Activated B cell treated with CpG ODN at 0.5 μM for 24 hours (primary cell): ENCODE measurements at regions of chr17 and their contacts with region 1.

Region 1: GRCh38 chr17:75077496-75078283 is 10.1 kb upstream of the SLC16A5 start:
- DNase-seq: peak; percentile 53
- ATAC-seq: peak; percentile 77
- H3K4me3 Mint-ChIP-seq: peak overlapping the region; percentile 83
- H3K27ac Mint-ChIP-seq: peak overlapping the region; percentile 72
- H3K4me1 Mint-ChIP-seq: peaks cover 29% of the 10 kb centered on the region
- H3K27me3 Mint-ChIP-seq: peaks cover 3% of the 10 kb centered on the region
- CTCF ChIP-seq: no peak

Region 2: GRCh38 chr17:75034236-75034908 is 43.3 kb before region 1 on chr17:
- CTCF ChIA-PET with region 1: no interaction called
- POLR2A ChIA-PET with region 1: interaction called, 3 read pairs
- intact Hi-C with region 1: loop called (anchors 2 kb)
- DNase-seq: peak; percentile 76
- ATAC-seq: peak; percentile 72
- H3K4me3 Mint-ChIP-seq: peak overlapping the region; percentile 91
- H3K27ac Mint-ChIP-seq: peak overlapping the region; percentile 89
- H3K4me1 Mint-ChIP-seq: peaks cover 34% of the 10 kb centered on the region
- H3K27me3 Mint-ChIP-seq: peaks cover 1% of the 10 kb centered on the region
- CTCF ChIP-seq: no peak

Region 3: GRCh38 chr17:75046582-75047289 is 31.0 kb before region 1 on chr17 and contains the starts of genes ATP5PD and KCTD2:
- CTCF ChIA-PET with region 1: interaction called, 3 read pairs
- POLR2A ChIA-PET with region 1: no interaction called
- intact Hi-C with region 1: loop called (anchors 2 kb)
- DNase-seq: peak; percentile 91
- ATAC-seq: peak; percentile 95
- H3K4me3 Mint-ChIP-seq: peak within 1 kb of the TSS; percentile 97
- H3K27ac Mint-ChIP-seq: peak within 1 kb of the TSS; percentile 86
- H3K4me1 Mint-ChIP-seq: peaks cover 37% of the 10 kb centered on the region
- H3K27me3 Mint-ChIP-seq: no peaks in the 10 kb centered on the region
- CTCF ChIP-seq: no peak
- total RNA-seq, gene ATP5PD: 158 and 181 TPM in 2 replicates
- total RNA-seq, gene KCTD2: 19.5 and 20.2 TPM in 2 replicates

Region 4: GRCh38 chr17:75087558-75088453 is 10.1 kb after region 1 on chr17 and contains the start of gene SLC16A5:
- CTCF ChIA-PET with region 1: no interaction called
- POLR2A ChIA-PET with region 1: interaction called, 15 read pairs
- intact Hi-C with region 1: loop called (anchors 1 kb)
- DNase-seq: peak; percentile 48
- ATAC-seq: peak; percentile 74
- H3K4me3 Mint-ChIP-seq: peak within 1 kb of the TSS; percentile 82
- H3K27ac Mint-ChIP-seq: no peak within 1 kb of the TSS
- H3K4me1 Mint-ChIP-seq: peaks cover 22% of the 10 kb centered on the region
- H3K27me3 Mint-ChIP-seq: no peaks in the 10 kb centered on the region
- CTCF ChIP-seq: no peak
- total RNA-seq, gene SLC16A5: 4.9 and 5.7 TPM in 2 replicates

Region 5: GRCh38 chr17:75102385-75102821 is 24.7 kb after region 1 on chr17:
- CTCF ChIA-PET with region 1: no interaction called
- POLR2A ChIA-PET with region 1: interaction called, 12 read pairs
- intact Hi-C with region 1: no loop called
- DNase-seq: no peak
- ATAC-seq: peak; percentile 77
- H3K4me3 Mint-ChIP-seq: peak overlapping the region; percentile 1
- H3K27ac Mint-ChIP-seq: peak overlapping the region; percentile 57
- H3K4me1 Mint-ChIP-seq: peaks cover 14% of the 10 kb centered on the region
- H3K27me3 Mint-ChIP-seq: no peaks in the 10 kb centered on the region
- CTCF ChIP-seq: no peak